ENCODE measurements at regions of chr5 and their contacts with region 1.

Region 1: DNA sequence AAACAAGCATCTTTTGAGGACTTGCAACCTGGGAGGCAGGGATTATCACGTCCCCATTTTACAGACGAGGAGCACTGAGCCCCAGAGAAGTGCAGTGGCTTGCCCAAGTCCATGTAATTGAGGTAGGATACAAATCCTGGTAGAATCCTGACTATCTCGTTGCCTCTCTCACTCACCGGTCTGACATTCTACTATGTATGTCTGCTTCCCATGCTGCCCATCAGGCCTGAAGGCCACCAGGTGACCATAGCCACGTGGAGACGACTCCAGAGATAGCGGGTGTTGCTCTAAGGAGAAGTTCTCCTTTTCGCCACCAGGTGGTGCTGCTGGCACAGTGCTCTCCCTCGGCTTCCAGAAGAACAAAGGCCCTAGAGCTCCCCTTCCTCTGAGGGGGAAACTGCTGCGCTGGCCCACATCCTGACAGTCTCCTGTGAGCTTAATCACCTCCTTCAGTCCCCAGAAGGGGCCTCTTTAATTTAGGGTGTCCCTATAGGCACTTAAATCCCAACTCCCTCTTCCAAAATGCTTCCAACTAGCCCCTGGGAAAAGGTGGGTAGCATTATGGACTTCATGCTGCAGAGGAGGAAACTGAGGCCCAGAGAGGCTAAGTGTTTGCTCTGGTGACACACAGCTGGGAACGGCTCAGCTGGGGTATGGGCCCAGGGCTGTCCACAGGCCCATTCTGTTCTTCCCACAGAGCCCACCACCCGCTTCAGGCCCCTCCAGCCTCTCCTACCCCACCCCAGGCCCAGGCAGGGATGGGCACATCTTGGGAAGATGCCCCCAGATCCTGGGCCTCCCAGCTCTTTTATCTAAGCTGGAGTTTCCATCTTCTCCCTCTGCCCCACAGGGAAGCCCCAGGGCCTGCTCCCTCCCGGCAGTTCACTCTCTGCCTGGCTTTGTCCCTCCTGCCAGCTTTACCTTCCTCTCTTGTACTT is 6.4 kb downstream of the SLC34A1 start:
- DNase-seq: peak; percentile 94
- H3K4me3 Mint-ChIP-seq: peak overlapping the region; percentile 17
- H3K27ac Mint-ChIP-seq: peak overlapping the region; percentile 87
- H3K4me1 Mint-ChIP-seq: peaks cover 41% of the 10 kb centered on the region
- H3K27me3 Mint-ChIP-seq: no peaks in the 10 kb centered on the region

Region 2: DNA sequence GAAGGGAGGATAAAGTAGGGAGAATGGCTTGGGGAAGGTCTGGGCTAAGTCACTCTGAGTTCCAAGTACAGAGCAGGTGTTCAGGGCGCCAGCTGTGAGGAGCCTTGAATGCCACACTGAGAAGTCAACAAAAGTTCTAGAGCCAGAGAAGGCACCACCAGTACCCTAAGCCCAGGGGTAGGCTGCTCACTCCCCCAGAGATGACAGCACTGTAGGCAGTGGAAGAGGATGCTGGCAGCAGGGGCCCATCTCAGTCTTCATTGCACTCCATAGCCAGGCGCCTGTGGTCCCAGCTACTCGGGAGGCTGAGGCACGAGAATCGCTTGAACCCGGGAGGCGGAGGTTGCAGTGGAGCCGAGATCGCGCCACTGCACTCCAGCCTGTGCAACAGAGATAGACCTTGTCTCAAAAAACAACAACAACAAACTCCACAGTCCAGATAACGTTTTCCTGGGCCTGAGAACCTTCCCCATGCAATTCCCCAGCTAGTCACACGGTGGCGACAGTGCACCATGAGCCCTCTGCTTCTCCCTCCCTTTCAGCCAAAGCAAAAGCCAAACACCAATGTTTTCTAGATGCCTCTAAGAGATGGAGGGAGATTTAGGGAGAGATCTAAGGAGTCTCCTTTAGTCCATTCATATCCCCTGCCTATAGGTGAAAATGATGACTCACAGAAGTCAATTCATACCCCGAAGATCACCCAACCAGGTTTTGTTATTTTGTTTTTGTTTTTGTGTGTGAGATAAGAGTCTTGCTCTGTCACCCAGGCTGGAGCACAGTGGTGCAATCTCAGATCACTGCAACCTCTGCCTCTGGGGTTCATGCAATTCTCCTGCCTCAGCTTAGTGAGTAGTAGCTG is 276.8 kb before region 1 on chr5:
- CTCF ChIA-PET with region 1: interaction called, 13 read pairs
- POLR2A ChIA-PET with region 1: no interaction called
- intact Hi-C with region 1: loop called (anchors 5 kb)
- DNase-seq: peak; percentile 89
- H3K4me3 Mint-ChIP-seq: no peak overlapping the region
- H3K27ac Mint-ChIP-seq: no peak overlapping the region
- H3K4me1 Mint-ChIP-seq: peaks cover 21% of the 10 kb centered on the region
- H3K27me3 Mint-ChIP-seq: no peaks in the 10 kb centered on the region

Region 3: GRCh38 chr5:177249761-177250526 is 140.7 kb before region 1 on chr5:
- CTCF ChIA-PET with region 1: no interaction called
- POLR2A ChIA-PET with region 1: no interaction called
- intact Hi-C with region 1: no loop called
- DNase-seq: no peak
- H3K4me3 Mint-ChIP-seq: no peak overlapping the region
- H3K27ac Mint-ChIP-seq: no peak overlapping the region
- H3K4me1 Mint-ChIP-seq: no peaks in the 10 kb centered on the region
- H3K27me3 Mint-ChIP-seq: no peaks in the 10 kb centered on the region

Region 4: GRCh38 chr5:177351385-177352329 is 39.0 kb before region 1 on chr5 and contains the start of gene LMAN2:
- CTCF ChIA-PET with region 1: interaction called, 66 read pairs
- POLR2A ChIA-PET with region 1: interaction called, 12 read pairs
- intact Hi-C with region 1: loop called (anchors 5 kb)
- DNase-seq: peak; percentile 95
- H3K4me3 Mint-ChIP-seq: peak within 1 kb of the TSS; percentile 96
- H3K27ac Mint-ChIP-seq: peak within 1 kb of the TSS; percentile 99
- H3K4me1 Mint-ChIP-seq: peaks cover 64% of the 10 kb centered on the region
- H3K27me3 Mint-ChIP-seq: no peaks in the 10 kb centered on the region
- total RNA-seq, gene LMAN2: 98.3 to 104 TPM

Region 5: DNA sequence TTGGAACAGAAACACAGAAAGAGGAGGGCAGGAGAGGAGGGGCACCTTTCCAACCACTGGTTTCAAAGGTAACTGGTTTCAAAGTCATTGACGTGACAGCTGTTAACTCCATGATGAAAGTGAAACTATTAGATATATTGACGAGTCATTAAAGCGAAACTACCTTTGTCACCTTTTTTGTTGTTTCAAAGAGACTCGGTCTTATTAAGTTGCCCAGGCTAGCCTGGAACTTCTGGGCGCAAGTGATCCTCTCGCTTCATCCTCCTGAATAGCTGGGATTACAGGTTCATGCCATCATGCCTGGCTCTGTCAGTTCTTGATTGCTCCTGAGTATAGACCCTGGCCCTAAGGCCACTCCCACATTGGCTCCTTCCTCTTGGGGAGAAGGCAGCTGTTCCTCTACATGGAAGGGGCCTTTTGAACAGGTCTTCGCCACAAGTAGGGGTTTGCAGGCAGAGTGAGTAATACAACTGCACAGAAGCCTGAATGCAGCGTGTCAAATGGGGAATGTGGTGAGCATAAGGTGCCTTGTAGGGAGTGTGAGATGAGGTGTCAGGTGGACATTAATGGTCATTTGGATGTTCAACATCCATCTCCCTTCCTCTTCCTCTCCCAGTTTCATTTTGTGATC is 22.1 kb after region 1 on chr5:
- CTCF ChIA-PET with region 1: interaction called, 17 read pairs
- POLR2A ChIA-PET with region 1: interaction called, 3 read pairs
- intact Hi-C with region 1: no loop called
- DNase-seq: peak; percentile 64
- H3K4me3 Mint-ChIP-seq: peak overlapping the region; percentile 55
- H3K27ac Mint-ChIP-seq: peak overlapping the region; percentile 82
- H3K4me1 Mint-ChIP-seq: peaks cover 46% of the 10 kb centered on the region
- H3K27me3 Mint-ChIP-seq: no peaks in the 10 kb centered on the region

Region 6: DNA sequence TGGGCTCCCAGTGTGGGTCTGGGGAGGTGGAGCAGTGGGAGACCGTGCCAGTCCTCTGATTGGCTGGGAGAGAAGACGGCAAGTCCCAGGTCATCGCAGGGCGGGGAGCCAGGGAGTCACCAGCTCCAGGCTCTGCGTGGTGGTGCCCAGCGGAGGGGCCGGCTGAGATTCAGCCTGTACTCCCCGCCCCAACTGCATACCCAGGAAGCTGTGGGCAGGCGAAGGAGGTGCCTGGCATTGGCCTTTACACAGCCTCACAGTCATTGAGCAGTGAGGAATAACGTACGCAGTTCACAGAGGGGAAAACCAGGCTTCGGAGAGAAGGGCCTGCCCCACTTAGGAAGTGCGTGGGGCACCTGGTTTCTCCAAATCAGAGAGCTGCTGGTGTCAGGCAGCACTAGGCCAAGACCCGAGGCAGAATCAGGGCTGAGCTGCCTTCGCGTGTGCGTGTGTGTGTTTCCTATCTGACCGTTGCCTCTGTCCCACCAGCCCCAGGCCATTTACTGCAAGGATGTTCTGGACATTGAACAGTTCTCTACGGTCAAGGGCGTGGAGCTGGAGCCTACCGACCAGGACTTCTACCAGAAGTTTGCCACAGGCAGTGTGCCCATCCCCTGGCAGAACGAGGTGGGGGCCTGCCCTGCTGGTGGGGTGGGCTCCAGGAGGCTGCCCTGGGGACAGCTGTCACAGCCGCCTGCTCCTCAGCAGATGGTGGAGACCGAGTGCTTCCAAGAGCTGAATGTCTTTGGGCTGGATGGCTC is 49.8 kb after region 1 on chr5:
- CTCF ChIA-PET with region 1: interaction called, 74 read pairs
- POLR2A ChIA-PET with region 1: interaction called, 5 read pairs
- intact Hi-C with region 1: no loop called
- DNase-seq: peak; percentile 86
- H3K4me3 Mint-ChIP-seq: peak overlapping the region; percentile 32
- H3K27ac Mint-ChIP-seq: peak overlapping the region; percentile 91
- H3K4me1 Mint-ChIP-seq: peaks cover 69% of the 10 kb centered on the region
- H3K27me3 Mint-ChIP-seq: no peaks in the 10 kb centered on the region

Region 7: GRCh38 chr5:177497292-177498033 is 106.8 kb after region 1 on chr5 and contains the start of gene PDLIM7:
- CTCF ChIA-PET with region 1: interaction called, 61 read pairs
- POLR2A ChIA-PET with region 1: interaction called, 4 read pairs
- intact Hi-C with region 1: loop called (anchors 1 kb)
- DNase-seq: peak; percentile 96
- H3K4me3 Mint-ChIP-seq: peak within 1 kb of the TSS; percentile 82
- H3K27ac Mint-ChIP-seq: peak within 1 kb of the TSS; percentile 23
- H3K4me1 Mint-ChIP-seq: peaks cover 27% of the 10 kb centered on the region
- H3K27me3 Mint-ChIP-seq: peaks cover 8% of the 10 kb centered on the region
- total RNA-seq, gene PDLIM7: 50.2 to 56.6 TPM